Ovary (tissue), 10 donors: ENCODE measurements at regions of chr10 and their contacts with region 1.

Region 1: GRCh38 chr10:31864834-31865518 is 63.7 kb downstream of the ARHGAP12 start:
- DNase-seq: no peak
- H3K4me3 ChIP-seq: no peak overlapping the region
- H3K27ac ChIP-seq: no peak overlapping the region
- H3K4me1 ChIP-seq: peaks cover 2% of the 10 kb centered on the region
- H3K27me3 ChIP-seq: no peaks in the 10 kb centered on the region
- CTCF ChIP-seq: no peak
- EP300 ChIP-seq: no peak
- POLR2A ChIP-seq: no peak

Region 2: GRCh38 chr10:31677195-31678138 is 187.5 kb before region 1 on chr10:
- intact Hi-C with region 1: no loop called
- DNase-seq: no peak
- H3K4me3 ChIP-seq: no peak overlapping the region
- H3K27ac ChIP-seq: no peak overlapping the region
- H3K4me1 ChIP-seq: no peaks in the 10 kb centered on the region
- H3K27me3 ChIP-seq: no peaks in the 10 kb centered on the region
- CTCF ChIP-seq: no peak
- EP300 ChIP-seq: no peak
- POLR2A ChIP-seq: no peak

Region 3: GRCh38 chr10:31928549-31929260 is 63.7 kb after region 1 on chr10 and contains the start of gene ARHGAP12:
- intact Hi-C with region 1: loop called in 1 of 4 experiments (anchors 10 kb)
- DNase-seq: peak; percentile 90 to 96 (median 93)
- H3K4me3 ChIP-seq: peak within 1 kb of the TSS; percentile 80
- H3K27ac ChIP-seq: peak within 1 kb of the TSS; percentile 78 to 91
- H3K4me1 ChIP-seq: peaks cover 4% of the 10 kb centered on the region
- H3K27me3 ChIP-seq: no peaks in the 10 kb centered on the region
- CTCF ChIP-seq: no peak
- EP300 ChIP-seq: no peak
- POLR2A ChIP-seq: peak; percentile 79
- total RNA-seq, gene ARHGAP12: 23.0 to 60.6 (median 35.7) TPM